Calu3 (cell line): ENCODE measurements at regions of chr2 and their contacts with region 1.

Region 1: DNA sequence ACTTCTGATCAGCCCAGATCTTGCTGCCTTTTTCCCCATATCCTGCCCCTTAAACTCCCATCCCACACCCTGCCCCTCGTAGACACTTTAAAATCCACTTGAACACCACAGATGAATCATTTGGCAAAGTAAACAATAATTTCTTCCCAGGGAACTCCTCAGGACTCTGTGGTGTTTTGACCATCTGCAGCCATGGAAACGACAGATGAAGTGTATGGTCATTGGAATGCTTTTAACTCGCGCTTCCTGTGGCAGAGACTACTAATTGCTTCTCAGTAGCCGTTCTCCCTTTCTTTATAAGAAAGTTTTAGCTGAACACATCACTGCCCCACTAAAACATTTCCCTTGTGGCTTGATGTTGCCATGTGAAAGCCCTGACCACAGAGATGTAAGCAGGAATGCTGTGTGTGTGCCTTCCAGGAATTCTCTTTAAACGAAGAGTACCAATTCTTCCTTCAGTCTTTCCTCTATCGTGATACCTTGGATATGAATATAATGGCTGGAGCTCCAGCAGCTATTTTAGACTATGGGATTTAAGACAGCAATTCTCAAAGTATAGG is 92.7 kb upstream of the PARD3B start:
- DNase-seq: peak; percentile 63
- H3K4me3 Mint-ChIP-seq: no peak overlapping the region
- H3K27ac Mint-ChIP-seq: no peak overlapping the region
- H3K4me1 Mint-ChIP-seq: peaks cover 33% of the 10 kb centered on the region
- H3K27me3 Mint-ChIP-seq: no peaks in the 10 kb centered on the region
- CTCF ChIP-seq: no peak

Region 2: GRCh38 chr2:204434660-204435462 is 17.7 kb before region 1 on chr2:
- CTCF ChIA-PET with region 1: no interaction called
- intact Hi-C with region 1: no loop called
- DNase-seq: no peak
- H3K4me3 Mint-ChIP-seq: no peak overlapping the region
- H3K27ac Mint-ChIP-seq: no peak overlapping the region
- H3K4me1 Mint-ChIP-seq: no peaks in the 10 kb centered on the region
- H3K27me3 Mint-ChIP-seq: no peaks in the 10 kb centered on the region
- CTCF ChIP-seq: no peak

Region 3: GRCh38 chr2:204625167-204625566 is 172.6 kb after region 1 on chr2:
- CTCF ChIA-PET with region 1: no interaction called
- intact Hi-C with region 1: loop called (anchors 10 kb)
- DNase-seq: peak; percentile 24
- H3K4me3 Mint-ChIP-seq: no peak overlapping the region
- H3K27ac Mint-ChIP-seq: no peak overlapping the region
- H3K4me1 Mint-ChIP-seq: no peaks in the 10 kb centered on the region
- H3K27me3 Mint-ChIP-seq: no peaks in the 10 kb centered on the region
- CTCF ChIP-seq: peak; percentile 19

Region 4: DNA sequence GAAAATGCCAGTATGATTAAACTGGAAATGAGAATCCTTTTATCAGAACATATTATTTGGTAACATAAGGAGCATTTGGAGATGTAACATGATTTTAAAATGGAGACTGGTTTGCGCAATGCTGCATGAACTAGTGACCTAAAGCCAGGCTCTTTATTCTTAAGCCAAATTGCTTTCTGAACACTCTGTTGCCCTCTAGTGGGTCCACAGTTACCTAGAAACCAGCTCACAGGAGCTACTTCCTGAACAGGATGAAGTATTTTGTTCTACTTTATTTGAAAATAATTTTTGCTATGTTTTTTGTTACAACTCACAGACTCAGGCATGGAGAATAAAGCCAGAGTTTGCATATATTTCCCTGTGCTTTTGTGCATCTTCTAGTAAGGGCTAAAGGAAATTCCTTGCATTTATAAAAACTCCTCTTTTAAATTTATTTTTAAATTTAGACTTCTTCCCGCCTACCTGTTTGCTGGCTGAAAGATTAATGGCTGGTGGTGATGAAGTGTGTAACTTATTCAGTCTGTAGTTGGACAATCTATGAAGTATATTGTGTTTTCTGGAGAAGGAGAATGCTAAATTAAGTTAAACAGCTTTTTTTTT is 239.5 kb after region 1 on chr2:
- CTCF ChIA-PET with region 1: interaction called, 3 read pairs
- intact Hi-C with region 1: loop called (anchors 5 kb)
- DNase-seq: peak; percentile 63
- H3K4me3 Mint-ChIP-seq: no peak overlapping the region
- H3K27ac Mint-ChIP-seq: no peak overlapping the region
- H3K4me1 Mint-ChIP-seq: peaks cover 8% of the 10 kb centered on the region
- H3K27me3 Mint-ChIP-seq: no peaks in the 10 kb centered on the region
- CTCF ChIP-seq: peak; percentile 57

Region 5: DNA sequence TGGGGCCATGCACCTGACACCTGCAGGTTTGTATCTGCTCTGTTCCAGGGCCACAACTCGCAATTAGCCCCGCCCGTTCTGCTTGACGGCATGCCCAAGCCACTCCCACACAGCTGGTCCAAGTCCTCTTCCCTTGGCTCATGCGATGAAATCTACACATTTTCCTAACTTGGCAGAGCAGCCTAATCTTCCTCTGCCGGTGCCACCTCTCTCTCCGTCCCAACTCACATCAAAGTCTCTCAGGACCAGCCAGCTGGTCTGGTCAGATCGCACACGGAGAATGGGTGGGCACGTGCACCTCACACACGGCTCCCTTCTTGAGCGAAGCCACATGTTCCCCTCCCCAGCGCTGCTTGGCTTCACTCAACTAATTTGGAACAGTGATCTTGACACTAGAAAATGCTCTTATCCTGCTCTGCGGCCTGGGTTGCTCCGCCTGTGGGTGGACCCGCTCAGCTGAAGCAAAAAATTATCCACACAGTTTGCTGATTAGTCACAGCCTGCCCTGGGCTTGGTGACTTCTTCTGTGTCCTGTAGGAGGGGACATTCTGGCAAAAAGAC is 1406.4 kb after region 1 on chr2:
- CTCF ChIA-PET with region 1: no interaction called
- intact Hi-C with region 1: no loop called
- DNase-seq: peak; percentile 30
- H3K4me3 Mint-ChIP-seq: peak overlapping the region; percentile 46
- H3K27ac Mint-ChIP-seq: no peak overlapping the region
- H3K4me1 Mint-ChIP-seq: peaks cover 10% of the 10 kb centered on the region
- H3K27me3 Mint-ChIP-seq: peaks cover 66% of the 10 kb centered on the region
- CTCF ChIP-seq: no peak